ENCODE measurements at regions of chr1 and their contacts with region 1.

Region 1: DNA sequence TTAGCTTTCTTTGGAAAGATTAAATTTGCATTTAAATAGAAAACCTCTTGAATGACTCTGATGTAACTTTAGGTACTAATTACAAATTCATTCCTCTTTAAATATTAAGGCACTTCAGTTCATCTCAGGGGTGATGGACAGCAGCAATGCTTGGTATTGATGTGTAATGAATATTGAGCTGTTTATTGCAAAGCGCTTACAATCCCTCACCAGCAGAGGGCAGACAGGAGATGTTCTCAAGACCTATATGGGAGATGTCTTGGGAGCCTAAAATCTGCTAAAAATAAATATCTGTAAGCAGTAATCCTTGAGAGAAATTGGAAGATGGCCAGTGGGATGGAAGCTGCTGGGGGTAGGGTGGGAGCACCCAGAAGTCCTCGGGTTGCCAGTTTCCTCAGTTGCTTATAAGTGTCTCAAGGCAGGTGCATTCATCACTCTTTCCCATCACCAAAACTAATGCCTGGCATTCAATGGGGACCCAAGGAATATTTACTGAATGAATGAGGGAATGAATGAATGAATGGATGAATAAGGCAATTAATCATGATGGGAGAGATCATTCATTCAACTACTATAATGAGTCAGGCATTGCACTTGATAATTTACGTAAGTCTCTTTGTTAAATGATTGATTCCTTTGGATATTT is 2.3 kb downstream of the KLHDC8A start:
- DNase-seq: peak; percentile 79
- ATAC-seq: peak; percentile 51
- H3K4me3 Mint-ChIP-seq: no peak overlapping the region
- H3K27ac Mint-ChIP-seq: no peak overlapping the region
- H3K4me1 Mint-ChIP-seq: no peaks in the 10 kb centered on the region
- H3K27me3 Mint-ChIP-seq: peaks cover 21% of the 10 kb centered on the region

Region 2: GRCh38 chr1:205273551-205273982 is 80.8 kb before region 1 on chr1:
- CTCF ChIA-PET with region 1: interaction called, 29 read pairs
- POLR2A ChIA-PET with region 1: no interaction called
- DNase-seq: peak; percentile 89
- ATAC-seq: peak; percentile 93
- H3K4me3 Mint-ChIP-seq: no peak overlapping the region
- H3K27ac Mint-ChIP-seq: no peak overlapping the region
- H3K4me1 Mint-ChIP-seq: peaks cover 22% of the 10 kb centered on the region
- H3K27me3 Mint-ChIP-seq: peaks cover 11% of the 10 kb centered on the region

Region 3: DNA sequence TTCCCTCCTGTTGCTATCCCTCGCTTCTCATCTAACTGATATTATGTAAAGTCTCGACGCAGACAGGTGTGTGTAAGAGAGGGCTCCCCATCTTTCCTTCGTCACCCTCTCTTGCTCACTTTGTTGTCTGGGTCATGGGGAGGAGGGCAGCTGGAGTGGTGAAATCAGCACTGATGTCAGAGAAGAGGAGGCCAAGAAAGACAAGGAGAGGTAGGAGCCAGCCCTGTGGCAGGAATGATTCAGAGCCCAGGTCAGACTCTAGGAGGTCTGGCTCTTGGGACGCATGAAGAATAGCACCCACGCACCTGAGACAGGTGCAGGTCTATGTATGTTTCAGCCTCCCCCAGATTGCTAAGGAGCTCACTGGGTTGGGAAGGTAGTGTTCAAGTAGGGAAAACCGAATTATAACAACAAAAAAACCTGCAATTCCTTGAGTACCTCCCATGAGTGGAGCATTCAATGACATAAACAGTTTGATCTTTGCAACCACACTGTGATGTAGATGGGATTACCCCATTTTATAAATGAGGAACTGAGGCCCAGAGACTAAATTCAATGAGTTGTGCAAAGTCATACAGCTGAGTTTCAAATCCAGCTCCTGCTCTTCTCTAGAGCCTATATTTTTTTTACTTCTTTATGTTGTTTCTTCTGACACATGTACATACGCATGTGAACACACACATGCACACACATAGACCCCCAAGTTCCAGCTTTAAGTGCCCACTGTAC is 43.2 kb before region 1 on chr1:
- CTCF ChIA-PET with region 1: no interaction called
- POLR2A ChIA-PET with region 1: no interaction called
- DNase-seq: no peak
- ATAC-seq: no peak
- H3K4me3 Mint-ChIP-seq: no peak overlapping the region
- H3K27ac Mint-ChIP-seq: no peak overlapping the region
- H3K4me1 Mint-ChIP-seq: peaks cover 34% of the 10 kb centered on the region
- H3K27me3 Mint-ChIP-seq: no peaks in the 10 kb centered on the region

Region 4: GRCh38 chr1:205335643-205336091 is 18.7 kb before region 1 on chr1:
- CTCF ChIA-PET with region 1: interaction called, 41 read pairs
- POLR2A ChIA-PET with region 1: interaction called, 3 read pairs
- DNase-seq: peak; percentile 84
- ATAC-seq: peak; percentile 90
- H3K4me3 Mint-ChIP-seq: no peak overlapping the region
- H3K27ac Mint-ChIP-seq: no peak overlapping the region
- H3K4me1 Mint-ChIP-seq: peaks cover 11% of the 10 kb centered on the region
- H3K27me3 Mint-ChIP-seq: peaks cover 38% of the 10 kb centered on the region

Region 5: DNA sequence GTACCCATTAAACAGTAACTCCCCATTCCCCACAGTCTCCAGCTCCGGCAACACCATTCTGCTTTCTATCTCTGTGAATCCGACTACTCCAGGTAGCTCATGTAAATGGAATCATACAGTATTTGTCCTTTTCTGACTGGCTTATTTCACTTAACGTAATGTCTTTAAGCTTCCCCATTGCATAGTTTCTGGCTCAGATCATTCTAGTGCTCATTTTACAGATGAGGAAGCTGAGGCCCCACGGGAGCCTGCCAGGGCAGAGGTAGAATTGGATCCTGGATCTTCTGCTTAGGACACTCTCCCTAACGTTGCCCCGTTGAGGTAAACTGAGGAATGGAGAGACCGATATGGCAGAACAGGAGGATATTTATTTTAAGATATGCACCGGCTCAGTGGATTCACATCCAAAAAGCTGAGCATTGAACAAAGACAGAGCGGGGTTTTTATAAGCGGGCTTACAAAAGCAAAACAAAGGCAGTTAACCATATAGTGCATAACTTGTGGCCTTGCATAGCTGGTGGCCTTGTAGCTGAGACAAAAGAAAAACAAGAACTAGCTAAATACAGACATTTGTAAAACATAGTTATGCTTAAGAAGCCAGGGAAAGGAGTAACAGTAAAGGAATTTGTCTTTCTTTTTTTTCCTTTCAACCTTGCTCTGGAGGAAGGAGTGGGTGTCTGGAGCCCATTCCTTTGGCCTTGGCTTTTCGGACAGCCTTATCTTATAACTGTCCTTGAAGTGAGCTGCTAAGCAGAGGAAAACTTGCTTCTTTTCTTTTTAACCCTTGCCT is 17.7 kb after region 1 on chr1:
- CTCF ChIA-PET with region 1: interaction called, 11 read pairs
- POLR2A ChIA-PET with region 1: no interaction called
- DNase-seq: no peak
- ATAC-seq: no peak
- H3K4me3 Mint-ChIP-seq: no peak overlapping the region
- H3K27ac Mint-ChIP-seq: no peak overlapping the region
- H3K4me1 Mint-ChIP-seq: peaks cover 5% of the 10 kb centered on the region
- H3K27me3 Mint-ChIP-seq: peaks cover 32% of the 10 kb centered on the region

Region 6: GRCh38 chr1:205396967-205397616 is 42.7 kb after region 1 on chr1:
- CTCF ChIA-PET with region 1: interaction called, 16 read pairs
- POLR2A ChIA-PET with region 1: no interaction called
- DNase-seq: peak; percentile 38
- ATAC-seq: no peak
- H3K4me3 Mint-ChIP-seq: no peak overlapping the region
- H3K27ac Mint-ChIP-seq: no peak overlapping the region
- H3K4me1 Mint-ChIP-seq: no peaks in the 10 kb centered on the region
- H3K27me3 Mint-ChIP-seq: peaks cover 23% of the 10 kb centered on the region

Region 7: DNA sequence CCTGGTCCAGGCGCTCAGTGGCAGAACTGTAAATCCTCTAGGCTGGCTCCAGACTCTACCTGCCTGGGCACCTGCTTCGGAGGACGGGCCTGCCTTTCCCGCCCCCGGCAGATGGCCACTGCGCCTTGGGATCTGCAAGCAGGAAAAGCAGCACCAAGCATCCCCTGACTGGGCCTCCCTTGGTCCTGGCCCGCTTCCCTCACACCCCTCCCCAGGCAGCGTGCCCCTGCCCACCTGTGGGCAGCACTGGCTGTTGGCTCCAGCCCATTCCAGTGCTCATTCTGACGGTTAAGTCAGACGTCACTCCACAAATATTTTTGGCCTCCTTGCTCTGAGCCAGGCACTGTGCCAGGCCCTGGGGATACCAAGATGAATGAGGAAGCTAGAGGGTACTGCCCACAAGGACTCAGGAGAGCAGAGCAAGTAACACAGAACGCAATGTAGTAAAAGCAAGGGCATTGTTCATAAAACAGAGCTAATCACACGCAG is 123.4 kb after region 1 on chr1:
- CTCF ChIA-PET with region 1: interaction called, 12 read pairs
- POLR2A ChIA-PET with region 1: no interaction called
- DNase-seq: no peak
- ATAC-seq: no peak
- H3K4me3 Mint-ChIP-seq: no peak overlapping the region
- H3K27ac Mint-ChIP-seq: no peak overlapping the region
- H3K4me1 Mint-ChIP-seq: peaks cover 29% of the 10 kb centered on the region
- H3K27me3 Mint-ChIP-seq: peaks cover 17% of the 10 kb centered on the region

Measured in activated CD8-positive, alpha-beta T cell treated with anti-CD3 and anti-CD28 coated beads, Interleukin-2, amount 10 ng/mL, durations not matched to agents 7 days and 5 days (primary cell).